CD4-positive, alpha-beta memory T cell (primary cell): ENCODE measurements at regions of chr17 and their contacts with region 1.

Region 1: DNA sequence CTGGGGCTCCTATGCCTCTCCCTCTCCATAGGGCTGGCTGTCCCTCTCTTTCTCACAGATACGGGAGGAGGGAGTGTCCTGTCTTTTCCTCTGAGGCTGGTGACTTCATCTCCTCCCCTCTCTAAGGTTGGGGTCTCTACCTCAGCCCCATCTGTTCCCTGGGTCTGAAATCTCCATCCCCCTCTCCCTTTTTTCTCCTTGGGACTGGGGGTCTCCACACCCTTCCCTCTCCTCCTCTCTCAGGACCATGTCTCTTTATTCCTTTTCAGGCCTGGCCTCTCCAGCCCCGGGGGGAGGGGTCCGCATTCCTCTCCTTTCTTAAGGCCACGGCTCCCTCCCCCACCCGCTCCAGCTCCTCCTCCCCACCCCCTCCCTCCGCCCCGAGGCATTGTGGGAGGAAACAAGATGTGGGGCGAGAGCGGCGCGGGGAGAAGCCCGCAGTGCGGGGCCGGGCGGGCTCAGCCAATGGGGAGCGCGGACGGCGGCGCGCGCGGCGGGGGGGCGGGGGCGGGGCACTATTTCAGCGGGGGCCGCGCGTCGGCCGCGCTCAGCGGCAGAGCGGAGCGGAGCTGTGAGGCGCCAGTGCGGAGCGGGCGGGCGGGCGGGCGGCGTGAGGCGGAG is at the start of gene DYNLL2:
- DNase-seq: peak; percentile 86 to 89 (median 88)
- H3K4me3 ChIP-seq: peak within 1 kb of the TSS; percentile 79 to 85
- H3K4me3 Mint-ChIP-seq: peak within 1 kb of the TSS; percentile 91 to 95 (median 94)
- H3K27ac ChIP-seq: peak within 1 kb of the TSS; percentile 80
- H3K27ac Mint-ChIP-seq: peak within 1 kb of the TSS; percentile 91 to 95 (median 93)
- H3K4me1 ChIP-seq: peaks cover 40% of the 10 kb centered on the region
- H3K4me1 Mint-ChIP-seq: peaks cover 20 to 41% (median 35%) of the 10 kb centered on the region in 4 donors
- H3K27me3 ChIP-seq: no peaks in the 10 kb centered on the region
- H3K27me3 Mint-ChIP-seq: peaks cover 0 to 10% of the 10 kb centered on the region in 2 donors
- total RNA-seq, gene DYNLL2: 45.6 to 45.8 TPM

Region 2: DNA sequence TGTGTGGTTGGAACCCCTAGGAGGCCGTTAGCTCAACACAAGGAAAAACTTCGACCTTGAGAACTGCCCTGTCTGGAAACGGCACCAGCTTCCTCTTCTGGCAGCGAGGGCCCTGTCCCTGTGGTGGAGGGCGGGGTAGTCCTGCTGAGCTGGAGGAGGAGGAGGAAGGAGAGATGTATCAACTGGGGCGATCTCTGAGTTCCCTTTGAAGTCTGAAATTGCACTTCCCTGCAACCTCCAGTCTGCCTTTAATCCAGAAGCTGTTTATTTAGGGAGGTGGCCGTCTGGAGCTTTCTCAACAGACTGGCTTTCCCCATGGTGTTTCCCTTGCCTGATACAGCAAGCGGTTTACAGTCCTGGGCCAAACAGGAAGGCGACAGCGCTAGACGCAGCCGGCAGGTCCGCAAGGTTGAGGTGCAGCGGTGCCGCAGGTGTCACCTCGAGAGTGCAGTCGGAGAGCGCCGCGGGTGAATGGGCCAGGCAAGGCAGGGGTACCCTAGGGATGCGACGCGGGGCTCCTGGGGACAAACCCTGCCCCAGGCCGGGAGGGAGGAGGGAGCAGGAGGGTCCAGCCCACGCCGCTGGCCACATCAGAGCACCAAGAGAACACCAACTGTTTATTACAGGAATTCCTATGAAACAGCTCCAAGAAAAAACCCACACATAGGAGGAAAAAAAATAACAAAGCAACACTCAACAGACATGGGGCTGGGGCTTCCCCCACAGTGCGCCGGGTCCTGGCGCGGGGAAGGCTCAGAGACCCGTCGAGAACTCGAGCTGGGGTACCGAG is 221.8 kb before region 1 on chr17:
- CTCF ChIA-PET with region 1: interaction called, 4 read pairs
- POLR2A ChIA-PET with region 1: interaction called, 6 read pairs
- intact Hi-C with region 1: loop called (anchors 2 kb)
- DNase-seq: peak; percentile 25 to 61 (median 32)
- H3K4me3 ChIP-seq: peak overlapping the region; percentile 52 to 66
- H3K4me3 Mint-ChIP-seq: peak overlapping the region; percentile 82 to 96 (median 86)
- H3K27ac ChIP-seq: no peak overlapping the region
- H3K27ac Mint-ChIP-seq: peak overlapping the region; percentile 13 to 75 (median 71)
- H3K4me1 ChIP-seq: peaks cover 13% of the 10 kb centered on the region
- H3K4me1 Mint-ChIP-seq: peaks cover 9 to 20% (median 14%) of the 10 kb centered on the region in 4 donors
- H3K27me3 ChIP-seq: no peaks in the 10 kb centered on the region
- H3K27me3 Mint-ChIP-seq: peaks cover 4 to 8% of the 10 kb centered on the region in 2 donors

Region 3: GRCh38 chr17:57987580-57988421 is 95.2 kb before region 1 on chr17 and contains the start of gene VEZF1:
- CTCF ChIA-PET with region 1: interaction called, 6 read pairs
- POLR2A ChIA-PET with region 1: interaction called, 9 read pairs
- intact Hi-C with region 1: loop called (anchors 5 kb)
- DNase-seq: peak; percentile 75 to 84 (median 80)
- H3K4me3 ChIP-seq: peak within 1 kb of the TSS; percentile 62 to 89
- H3K4me3 Mint-ChIP-seq: peak within 1 kb of the TSS; percentile 94 to 97 (median 96)
- H3K27ac ChIP-seq: peak within 1 kb of the TSS; percentile 76
- H3K27ac Mint-ChIP-seq: peak within 1 kb of the TSS; percentile 94 to 98 (median 97)
- H3K4me1 ChIP-seq: peaks cover 55% of the 10 kb centered on the region
- H3K4me1 Mint-ChIP-seq: peaks cover 46 to 69% (median 61%) of the 10 kb centered on the region in 4 donors
- H3K27me3 ChIP-seq: no peaks in the 10 kb centered on the region
- H3K27me3 Mint-ChIP-seq: no peaks in the 10 kb centered on the region
- total RNA-seq, gene VEZF1: 76.0 to 76.6 TPM

Region 4: DNA sequence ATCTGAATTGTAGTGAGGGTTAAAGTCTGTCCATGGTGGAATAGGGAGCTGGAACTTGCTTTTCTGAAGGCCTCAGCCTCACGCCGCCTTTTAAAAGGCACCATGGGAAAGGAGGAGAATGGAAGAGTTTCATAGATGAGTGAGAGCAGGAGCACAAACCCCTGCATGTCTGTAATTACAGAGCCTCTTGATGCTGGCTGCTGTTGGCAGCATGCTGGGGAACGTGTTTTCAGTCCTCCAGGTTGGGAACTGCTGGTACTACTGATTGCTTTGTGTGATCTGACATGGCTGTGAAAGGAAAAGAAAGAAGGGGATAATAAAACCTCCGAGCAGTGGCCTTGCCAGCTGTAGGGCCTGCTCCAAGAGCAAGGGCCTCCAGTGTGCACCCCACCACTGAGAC is 16.6 kb before region 1 on chr17:
- CTCF ChIA-PET with region 1: no interaction called
- POLR2A ChIA-PET with region 1: no interaction called
- intact Hi-C with region 1: no loop called
- DNase-seq: no peak
- H3K4me3 ChIP-seq: no peak overlapping the region
- H3K4me3 Mint-ChIP-seq: no peak overlapping the region
- H3K27ac ChIP-seq: no peak overlapping the region
- H3K27ac Mint-ChIP-seq: no peak overlapping the region
- H3K4me1 ChIP-seq: no peaks in the 10 kb centered on the region
- H3K4me1 Mint-ChIP-seq: no peaks in the 10 kb centered on the region
- H3K27me3 ChIP-seq: peaks cover 7% of the 10 kb centered on the region
- H3K27me3 Mint-ChIP-seq: peaks cover 7 to 11% of the 10 kb centered on the region in 2 donors

Region 5: DNA sequence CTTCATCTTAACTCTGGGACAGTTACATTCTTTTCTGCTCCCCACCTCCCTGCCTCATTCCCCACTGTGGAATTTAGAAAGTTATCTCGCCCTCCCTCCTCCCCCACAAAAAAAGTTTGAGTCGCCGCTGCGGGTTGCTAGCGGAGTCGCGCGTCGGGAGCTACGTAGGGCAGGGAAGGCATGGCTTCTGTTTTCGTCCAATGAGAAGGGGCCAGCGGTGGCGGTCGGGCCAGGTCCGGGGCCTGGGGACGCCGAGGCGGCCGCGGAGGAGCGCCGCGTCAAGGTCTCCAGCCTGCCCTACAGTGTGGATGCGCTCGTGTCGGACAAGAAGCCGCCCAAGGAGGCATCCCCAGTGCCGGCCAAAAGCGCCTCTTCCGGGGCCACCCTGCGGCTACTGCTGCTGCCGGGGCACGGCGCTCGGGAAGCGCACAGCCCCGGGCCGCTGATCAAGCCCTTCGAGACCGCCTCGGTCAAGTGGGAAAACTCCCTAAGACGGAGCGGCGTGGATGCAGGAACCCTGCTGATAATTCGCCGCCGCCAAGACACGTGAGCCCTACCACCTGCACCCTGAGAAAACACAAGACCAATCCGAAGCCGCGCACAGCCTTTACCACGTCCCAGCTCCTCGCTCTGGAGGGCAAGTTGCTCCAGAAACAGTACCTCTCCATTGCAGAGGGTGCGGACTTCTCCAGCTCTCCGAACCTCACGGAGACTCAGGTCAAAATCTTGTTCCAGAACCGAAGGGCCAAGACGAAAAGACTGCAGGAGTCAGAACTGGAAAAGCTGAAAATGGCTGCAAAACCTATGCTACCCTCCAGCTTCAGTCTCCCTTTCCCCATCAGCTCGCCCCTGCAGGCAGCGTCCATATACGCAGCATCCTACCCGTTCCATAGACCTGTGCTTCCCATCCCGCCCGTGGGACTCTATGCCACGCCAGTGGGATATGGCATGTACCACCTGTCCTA is 74.1 kb after region 1 on chr17:
- CTCF ChIA-PET with region 1: no interaction called
- POLR2A ChIA-PET with region 1: interaction called, 3 read pairs
- intact Hi-C with region 1: loop called (anchors 5 kb)
- DNase-seq: peak; percentile 54 to 67 (median 58)
- H3K4me3 ChIP-seq: peak overlapping the region; percentile 55 to 63
- H3K4me3 Mint-ChIP-seq: peak overlapping the region; percentile 87 to 98 (median 92)
- H3K27ac ChIP-seq: peak overlapping the region; percentile 68
- H3K27ac Mint-ChIP-seq: peak overlapping the region; percentile 90 to 99 (median 97)
- H3K4me1 ChIP-seq: peaks cover 63% of the 10 kb centered on the region
- H3K4me1 Mint-ChIP-seq: peaks cover 49 to 82% (median 68%) of the 10 kb centered on the region in 4 donors
- H3K27me3 ChIP-seq: no peaks in the 10 kb centered on the region
- H3K27me3 Mint-ChIP-seq: no peaks in the 10 kb centered on the region

Region 6: DNA sequence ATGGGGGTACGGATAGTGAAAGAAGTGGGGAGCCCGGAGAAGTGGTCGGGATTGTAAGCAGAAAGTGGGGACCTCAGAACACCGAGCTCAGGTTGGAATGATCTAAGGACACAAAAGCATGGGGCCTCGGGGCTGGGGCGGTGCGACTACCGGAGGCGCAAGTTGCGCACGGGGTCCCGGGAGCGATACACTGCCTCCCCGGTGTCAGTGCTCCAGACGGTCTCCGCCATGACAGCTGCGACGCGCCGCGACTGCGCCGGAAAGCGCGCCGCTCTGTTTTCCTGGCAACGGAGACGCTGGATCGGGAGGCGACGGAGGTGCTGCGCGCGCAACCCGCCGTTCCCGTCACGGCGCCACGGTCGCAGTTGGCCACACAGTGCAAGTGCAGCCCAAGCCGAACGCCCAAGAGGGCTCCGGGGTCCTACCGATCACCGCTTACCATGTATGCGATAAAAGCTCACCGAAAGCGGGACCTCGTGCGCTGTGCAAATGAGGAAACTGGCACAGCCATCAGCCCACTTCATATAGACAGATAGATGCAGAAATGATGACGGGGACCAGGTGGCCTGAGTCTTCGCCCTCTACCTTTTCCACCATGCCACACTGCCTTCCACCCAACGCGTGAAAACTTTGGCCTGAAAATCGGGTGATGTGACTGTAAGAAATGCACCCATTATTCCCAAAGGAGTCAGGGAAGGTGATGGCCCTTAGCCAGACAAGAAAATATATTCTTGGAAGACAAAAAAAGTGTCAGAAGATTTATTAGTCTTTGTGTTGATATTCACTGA is 136.2 kb after region 1 on chr17 and contains the start of gene MKS1:
- CTCF ChIA-PET with region 1: no interaction called
- POLR2A ChIA-PET with region 1: no interaction called
- intact Hi-C with region 1: loop called (anchors 2 kb)
- DNase-seq: peak; percentile 94 to 96 (median 95)
- H3K4me3 ChIP-seq: peak within 1 kb of the TSS; percentile 71 to 88
- H3K4me3 Mint-ChIP-seq: peak within 1 kb of the TSS; percentile 91 to 99 (median 94)
- H3K27ac ChIP-seq: peak within 1 kb of the TSS; percentile 54
- H3K27ac Mint-ChIP-seq: peak within 1 kb of the TSS; percentile 94 to 99 (median 97)
- H3K4me1 ChIP-seq: peaks cover 15% of the 10 kb centered on the region
- H3K4me1 Mint-ChIP-seq: peaks cover 19 to 28% (median 23%) of the 10 kb centered on the region in 4 donors
- H3K27me3 ChIP-seq: no peaks in the 10 kb centered on the region
- H3K27me3 Mint-ChIP-seq: peaks cover 0 to 2% of the 10 kb centered on the region in 2 donors
- total RNA-seq, gene MKS1: 27.7 to 29.4 TPM